HAP-1 (cell line): ENCODE measurements at regions of chr9 and their contacts with region 1.

Region 1: DNA sequence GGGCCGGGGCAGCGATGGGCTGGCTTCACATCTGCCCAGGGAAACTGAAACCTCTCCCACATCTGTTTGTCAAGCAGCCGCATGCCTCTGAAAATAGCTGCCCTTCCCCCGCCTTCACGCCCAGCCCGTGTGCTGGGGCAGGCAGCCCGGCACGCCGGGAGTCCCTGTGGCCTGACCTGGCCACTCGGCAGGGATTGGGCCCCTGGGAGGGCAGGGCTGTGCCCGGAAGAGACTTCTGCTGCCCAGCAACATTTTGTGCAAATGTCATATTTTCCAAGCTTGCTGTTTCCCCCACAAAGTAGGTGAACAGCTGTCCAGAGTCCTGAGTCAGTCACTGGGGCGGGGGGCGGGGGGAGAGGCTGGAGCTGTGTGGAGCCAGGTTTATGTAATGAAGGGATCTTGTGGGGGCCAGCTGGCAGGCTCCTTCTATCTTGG is 8.2 kb downstream of the COL27A1 start:
- DNase-seq: no peak
- H3K4me3 ChIP-seq: no peak overlapping the region
- H3K4me1 ChIP-seq: no peaks in the 10 kb centered on the region
- H3K27me3 ChIP-seq: no peaks in the 10 kb centered on the region

Region 2: DNA sequence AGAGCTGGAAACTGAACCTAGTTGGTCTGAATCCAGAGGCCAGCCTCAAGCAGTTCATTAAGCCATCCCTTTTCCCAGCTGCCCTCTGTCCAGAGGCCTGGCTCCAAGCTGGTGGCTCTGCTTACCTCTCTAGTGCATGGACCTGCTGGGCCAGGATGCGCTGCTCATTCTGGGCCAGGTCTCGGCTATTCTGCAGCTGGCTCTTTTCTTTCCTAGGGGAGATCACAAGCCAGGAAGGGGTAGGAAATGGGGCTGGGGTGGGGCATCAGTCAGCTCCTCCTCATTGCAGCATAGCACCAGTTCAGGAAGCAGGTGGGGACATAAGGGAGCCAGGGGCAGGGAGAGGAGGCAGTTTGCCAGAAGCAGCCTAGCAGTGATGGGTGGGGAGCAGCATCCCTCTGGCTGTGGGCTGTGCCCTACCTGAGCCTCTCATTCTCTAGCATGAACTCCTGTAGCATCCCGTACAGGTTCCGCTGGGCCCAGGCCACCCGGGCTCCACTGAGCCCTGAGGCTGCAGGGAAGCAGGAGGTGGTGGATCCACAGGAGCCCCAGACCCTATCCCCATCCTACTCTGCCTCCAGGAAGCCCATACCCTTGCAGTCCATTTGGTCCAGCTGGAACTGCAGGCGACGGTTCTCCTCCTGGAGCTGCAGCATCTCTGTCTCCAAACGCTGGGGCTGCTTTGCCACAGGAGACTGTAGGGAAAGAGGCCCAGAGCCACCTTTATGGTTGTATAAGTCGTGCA is 69.6 kb before region 1 on chr9:
- in situ Hi-C with region 1: no loop called
- DNase-seq: no peak
- H3K4me3 ChIP-seq: no peak overlapping the region
- H3K4me1 ChIP-seq: peaks cover 3% of the 10 kb centered on the region; the same call in 1 of the 2 replicates
- H3K27me3 ChIP-seq: no peaks in the 10 kb centered on the region

Region 3: GRCh38 chr9:114108016-114108833 is 55.3 kb before region 1 on chr9:
- in situ Hi-C with region 1: loop called (anchors 10 kb)
- DNase-seq: peak; percentile 69 to 85
- H3K4me3 ChIP-seq: no peak overlapping the region
- H3K4me1 ChIP-seq: no peaks in the 10 kb centered on the region
- H3K27me3 ChIP-seq: peaks cover 23% of the 10 kb centered on the region